ENCODE measurements at regions of chr6 and their contacts with region 1.

Region 1: GRCh38 chr6:54916862-54917261 is 70.3 kb downstream of the FAM83B start:
- DNase-seq: no peak
- H3K4me3 ChIP-seq: no peak overlapping the region
- CTCF ChIP-seq: no peak
- POLR2A ChIP-seq: no peak

Region 2: GRCh38 chr6:53369876-53370515 is 1546.9 kb before region 1 on chr6:
- intact Hi-C with region 1: loop called (anchors 5 kb)
- DNase-seq: no peak
- H3K4me3 ChIP-seq: no peak overlapping the region
- CTCF ChIP-seq: no peak
- POLR2A ChIP-seq: no peak

Region 3: DNA sequence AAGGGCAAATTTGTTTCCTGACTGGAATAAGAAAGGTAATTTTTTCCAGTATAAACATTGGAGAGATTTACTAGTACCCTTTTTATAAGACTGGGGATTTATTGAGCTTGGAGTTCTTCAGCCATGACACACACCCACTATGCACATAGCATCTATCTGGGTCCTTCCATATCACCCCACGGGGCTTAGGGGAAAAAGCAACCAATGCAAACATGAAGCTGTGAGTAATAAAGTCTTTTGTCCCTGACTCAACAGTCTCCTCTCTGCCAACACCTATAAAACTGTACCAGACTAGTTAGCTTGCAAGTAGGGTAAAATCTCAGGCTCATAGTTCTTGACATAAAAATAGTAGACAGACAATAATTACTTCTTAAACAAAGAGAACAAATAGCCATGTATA is 1307.1 kb after region 1 on chr6:
- intact Hi-C with region 1: no loop called
- DNase-seq: no peak
- H3K4me3 ChIP-seq: no peak overlapping the region
- CTCF ChIP-seq: no peak
- POLR2A ChIP-seq: no peak

Measured in lower leg skin (tissue), 4 donors.